CD4-positive, alpha-beta T cell (primary cell): ENCODE measurements at regions of chr2 and their contacts with region 1.

Region 1: DNA sequence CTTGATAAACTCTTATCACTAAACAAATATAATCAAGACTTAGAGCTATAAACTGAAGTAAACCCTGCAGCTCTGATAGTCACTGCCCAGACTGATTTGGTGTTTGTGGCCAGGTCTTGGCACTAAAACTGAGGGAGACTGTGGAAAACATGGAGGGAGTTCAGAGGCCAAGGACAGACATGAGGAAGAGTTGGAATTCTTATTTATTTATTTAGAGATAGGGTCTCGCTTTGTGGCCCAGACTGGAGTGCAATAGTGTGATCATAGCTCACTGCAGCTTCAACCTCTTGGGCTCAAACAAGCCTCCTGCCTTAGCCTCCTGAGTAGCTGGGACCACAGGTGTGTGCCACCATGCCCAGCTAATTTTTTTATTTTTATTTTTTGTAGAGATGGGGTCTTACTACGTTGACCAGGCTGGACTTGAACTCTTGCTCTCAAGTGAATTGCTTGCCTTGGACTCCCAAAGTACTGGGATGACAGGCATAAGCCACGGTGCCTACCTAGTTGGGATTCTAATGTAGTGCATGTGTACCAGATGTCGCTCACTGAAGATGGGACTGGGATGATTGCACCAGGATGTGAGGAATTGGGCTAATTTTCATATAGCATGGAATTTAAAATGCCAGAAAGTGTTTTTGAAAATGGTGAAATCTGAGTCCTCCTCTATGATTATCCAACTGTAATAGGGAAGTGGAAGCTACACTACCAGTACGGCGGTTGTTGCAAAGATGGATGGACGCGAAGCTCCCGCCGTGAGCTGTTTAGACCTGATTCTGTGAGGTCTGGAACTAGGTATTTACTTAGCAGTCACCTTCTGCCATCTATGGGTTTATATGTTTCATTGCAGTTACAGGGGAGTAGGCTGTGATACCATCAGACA is 52.7 kb upstream of the CTLA4 start:
- DNase-seq: peak; percentile 25 to 85 (median 42)
- ATAC-seq: peak; percentile 89
- H3K4me3 ChIP-seq: peak overlapping the region; percentile 25
- H3K4me3 Mint-ChIP-seq: peak overlapping the region; percentile 85
- H3K27ac ChIP-seq: no peak overlapping the region
- H3K27ac Mint-ChIP-seq: peak overlapping the region; percentile 52
- H3K4me1 ChIP-seq: peaks cover 39% of the 10 kb centered on the region
- H3K4me1 Mint-ChIP-seq: peaks cover 52% of the 10 kb centered on the region
- H3K27me3 ChIP-seq: no peaks in the 10 kb centered on the region
- H3K27me3 Mint-ChIP-seq: no peaks in the 10 kb centered on the region
- CTCF ChIP-seq: peak; percentile 81

Region 2: DNA sequence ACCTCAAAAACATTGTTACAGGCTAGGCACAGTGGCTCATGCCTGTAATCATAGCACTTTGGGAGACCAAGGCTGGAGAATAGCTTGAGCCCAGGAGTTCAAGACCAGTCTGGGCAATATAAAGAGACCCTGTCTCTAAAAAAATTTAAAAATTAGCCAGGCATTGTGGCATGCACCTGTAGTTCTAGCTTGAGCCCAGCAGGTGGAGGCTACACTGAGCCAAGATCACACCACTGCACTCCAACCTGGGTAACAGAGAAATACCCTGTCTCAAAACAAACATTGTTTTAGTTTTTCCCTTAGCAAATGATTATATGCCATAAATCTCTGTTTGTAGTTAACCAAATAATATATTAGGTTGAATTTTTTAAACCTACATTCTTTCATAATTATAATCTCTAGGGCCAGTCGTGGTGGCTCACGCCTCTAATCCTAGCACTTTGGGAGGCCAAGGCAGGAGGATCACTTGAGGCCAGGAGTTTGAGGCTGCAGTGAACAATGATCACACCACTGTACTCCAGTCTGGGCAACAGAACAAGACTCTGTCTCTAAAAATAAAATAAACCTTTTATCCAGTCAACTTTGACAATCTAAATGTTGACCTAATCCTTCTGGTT is 589.4 kb before region 1 on chr2:
- CTCF ChIA-PET with region 1: interaction called, 6 read pairs
- POLR2A ChIA-PET with region 1: no interaction called
- intact Hi-C with region 1: loop called (anchors 1 to 2 kb)
- DNase-seq: peak in 10 of 14 experiments; percentile 8 to 68 (median 20)
- ATAC-seq: peak; percentile 94
- H3K4me3 ChIP-seq: no peak overlapping the region
- H3K4me3 Mint-ChIP-seq: no peak overlapping the region
- H3K27ac ChIP-seq: no peak overlapping the region
- H3K27ac Mint-ChIP-seq: no peak overlapping the region
- H3K4me1 ChIP-seq: no peaks in the 10 kb centered on the region
- H3K4me1 Mint-ChIP-seq: no peaks in the 10 kb centered on the region
- H3K27me3 ChIP-seq: no peaks in the 10 kb centered on the region
- H3K27me3 Mint-ChIP-seq: no peaks in the 10 kb centered on the region
- CTCF ChIP-seq: peak; percentile 74

Region 3: GRCh38 chr2:203551778-203552177 is 263.1 kb before region 1 on chr2:
- CTCF ChIA-PET with region 1: no interaction called
- POLR2A ChIA-PET with region 1: no interaction called
- intact Hi-C with region 1: no loop called
- DNase-seq: no peak
- ATAC-seq: no peak
- H3K4me3 ChIP-seq: no peak overlapping the region
- H3K4me3 Mint-ChIP-seq: no peak overlapping the region
- H3K27ac ChIP-seq: no peak overlapping the region
- H3K27ac Mint-ChIP-seq: no peak overlapping the region
- H3K4me1 ChIP-seq: no peaks in the 10 kb centered on the region
- H3K4me1 Mint-ChIP-seq: peaks cover 7% of the 10 kb centered on the region
- H3K27me3 ChIP-seq: no peaks in the 10 kb centered on the region
- H3K27me3 Mint-ChIP-seq: no peaks in the 10 kb centered on the region
- CTCF ChIP-seq: no peak

Region 4: DNA sequence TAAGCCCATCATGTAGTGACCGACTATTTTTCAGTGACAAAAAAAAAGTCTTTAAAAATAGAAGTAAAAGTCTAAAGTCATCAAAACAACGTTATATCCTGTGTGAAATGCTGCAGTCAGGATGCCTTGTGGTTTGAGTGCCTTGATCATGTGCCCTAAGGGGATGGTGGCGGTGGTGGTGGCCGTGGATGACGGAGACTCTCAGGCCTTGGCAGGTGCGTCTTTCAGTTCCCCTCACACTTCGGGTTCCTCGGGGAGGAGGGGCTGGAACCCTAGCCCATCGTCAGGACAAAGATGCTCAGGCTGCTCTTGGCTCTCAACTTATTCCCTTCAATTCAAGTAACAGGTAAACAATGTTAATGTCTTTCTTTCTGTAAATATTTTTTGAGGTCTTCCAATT is 108.5 kb before region 1 on chr2 and contains the start of gene CD28:
- CTCF ChIA-PET with region 1: interaction called, 7 read pairs
- POLR2A ChIA-PET with region 1: interaction called, 6 read pairs
- intact Hi-C with region 1: loop called in 1 of 2 experiments (anchors 1 kb)
- DNase-seq: peak; percentile 78 to 97 (median 86)
- ATAC-seq: peak; percentile 76
- H3K4me3 ChIP-seq: peak within 1 kb of the TSS; percentile 81
- H3K4me3 Mint-ChIP-seq: peak within 1 kb of the TSS; percentile 90
- H3K27ac ChIP-seq: peak within 1 kb of the TSS; percentile 82 to 92
- H3K27ac Mint-ChIP-seq: peak within 1 kb of the TSS; percentile 92
- H3K4me1 ChIP-seq: peaks cover 22% of the 10 kb centered on the region
- H3K4me1 Mint-ChIP-seq: peaks cover 54% of the 10 kb centered on the region
- H3K27me3 ChIP-seq: no peaks in the 10 kb centered on the region
- H3K27me3 Mint-ChIP-seq: no peaks in the 10 kb centered on the region
- CTCF ChIP-seq: no peak
- total RNA-seq, gene CD28: 128 to 130 TPM

Region 5: GRCh38 chr2:203751685-203752271 is 63.1 kb before region 1 on chr2:
- CTCF ChIA-PET with region 1: interaction called, 11 read pairs
- POLR2A ChIA-PET with region 1: interaction called, 5 read pairs
- intact Hi-C with region 1: no loop called
- DNase-seq: no peak
- ATAC-seq: no peak
- H3K4me3 ChIP-seq: no peak overlapping the region
- H3K4me3 Mint-ChIP-seq: no peak overlapping the region
- H3K27ac ChIP-seq: no peak overlapping the region
- H3K27ac Mint-ChIP-seq: peak overlapping the region; percentile 46
- H3K4me1 ChIP-seq: peaks cover 34% of the 10 kb centered on the region
- H3K4me1 Mint-ChIP-seq: peaks cover 71% of the 10 kb centered on the region
- H3K27me3 ChIP-seq: no peaks in the 10 kb centered on the region
- H3K27me3 Mint-ChIP-seq: no peaks in the 10 kb centered on the region
- CTCF ChIP-seq: no peak

Region 6: DNA sequence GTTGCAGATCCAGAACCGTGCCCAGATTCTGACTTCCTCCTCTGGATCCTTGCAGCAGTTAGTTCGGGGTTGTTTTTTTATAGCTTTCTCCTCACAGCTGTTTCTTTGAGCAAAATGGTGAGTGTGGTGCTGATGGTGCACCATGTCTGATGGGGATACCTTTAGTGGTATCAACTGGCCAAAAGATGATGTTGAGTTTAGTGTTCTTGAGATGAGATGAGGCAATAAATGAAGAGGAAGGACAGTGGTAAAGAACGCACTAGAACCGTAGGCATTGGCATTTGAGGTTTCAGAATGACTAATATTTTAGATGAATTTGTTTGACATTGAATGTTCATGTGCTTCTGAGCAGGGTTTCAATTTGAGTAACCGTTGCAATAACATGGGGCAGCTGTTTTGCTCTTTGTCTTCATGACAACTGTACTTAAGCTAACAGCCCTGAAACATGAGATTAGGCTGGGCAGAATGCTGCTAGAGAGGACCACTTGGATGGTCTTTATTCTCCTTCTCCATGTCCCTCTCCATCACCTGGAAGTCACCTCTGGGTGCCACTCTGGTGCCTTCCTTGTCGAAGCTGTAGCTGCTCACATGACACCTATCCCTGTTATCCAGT is 56.6 kb after region 1 on chr2:
- CTCF ChIA-PET with region 1: interaction called, 6 read pairs
- POLR2A ChIA-PET with region 1: interaction called, 13 read pairs
- intact Hi-C with region 1: no loop called
- DNase-seq: peak in 4 of 14 experiments; percentile 28 to 62 (median 48)
- ATAC-seq: no peak
- H3K4me3 ChIP-seq: peak overlapping the region; percentile 58
- H3K4me3 Mint-ChIP-seq: peak overlapping the region; percentile 89
- H3K27ac ChIP-seq: peak overlapping the region; percentile 6 to 62
- H3K27ac Mint-ChIP-seq: peak overlapping the region; percentile 93
- H3K4me1 ChIP-seq: peaks cover 57% of the 10 kb centered on the region
- H3K4me1 Mint-ChIP-seq: peaks cover 97% of the 10 kb centered on the region
- H3K27me3 ChIP-seq: no peaks in the 10 kb centered on the region
- H3K27me3 Mint-ChIP-seq: no peaks in the 10 kb centered on the region
- CTCF ChIP-seq: no peak